ENCODE measurements at regions of chr10 and their contacts with region 1.

Region 1: DNA sequence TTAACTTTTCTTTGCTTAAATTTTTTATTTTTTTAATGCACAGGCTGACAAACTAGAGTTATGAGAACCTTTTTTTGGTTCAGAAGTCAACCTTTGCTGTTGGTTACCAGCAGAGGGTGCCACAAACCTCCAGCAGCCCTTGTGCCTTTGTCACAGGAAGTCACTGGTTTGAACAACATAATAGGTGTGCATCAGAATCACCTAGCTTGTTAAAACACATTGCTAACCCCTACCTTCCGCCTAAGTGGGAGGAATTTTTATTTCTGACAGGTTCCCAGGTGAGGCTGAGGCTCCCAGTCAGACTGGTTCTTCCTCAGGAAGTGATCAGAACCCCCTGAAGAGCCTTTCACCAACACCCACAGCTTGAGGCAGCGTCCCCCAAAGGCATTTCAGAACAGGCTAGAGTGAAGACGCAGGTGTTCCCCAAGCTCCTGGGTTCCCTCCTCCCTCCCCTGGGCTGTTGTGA is 22.6 kb upstream of the VDAC2 start:
- DNase-seq: no peak
- H3K4me3 ChIP-seq: no peak overlapping the region
- CTCF ChIP-seq: peak; percentile 68

Region 2: DNA sequence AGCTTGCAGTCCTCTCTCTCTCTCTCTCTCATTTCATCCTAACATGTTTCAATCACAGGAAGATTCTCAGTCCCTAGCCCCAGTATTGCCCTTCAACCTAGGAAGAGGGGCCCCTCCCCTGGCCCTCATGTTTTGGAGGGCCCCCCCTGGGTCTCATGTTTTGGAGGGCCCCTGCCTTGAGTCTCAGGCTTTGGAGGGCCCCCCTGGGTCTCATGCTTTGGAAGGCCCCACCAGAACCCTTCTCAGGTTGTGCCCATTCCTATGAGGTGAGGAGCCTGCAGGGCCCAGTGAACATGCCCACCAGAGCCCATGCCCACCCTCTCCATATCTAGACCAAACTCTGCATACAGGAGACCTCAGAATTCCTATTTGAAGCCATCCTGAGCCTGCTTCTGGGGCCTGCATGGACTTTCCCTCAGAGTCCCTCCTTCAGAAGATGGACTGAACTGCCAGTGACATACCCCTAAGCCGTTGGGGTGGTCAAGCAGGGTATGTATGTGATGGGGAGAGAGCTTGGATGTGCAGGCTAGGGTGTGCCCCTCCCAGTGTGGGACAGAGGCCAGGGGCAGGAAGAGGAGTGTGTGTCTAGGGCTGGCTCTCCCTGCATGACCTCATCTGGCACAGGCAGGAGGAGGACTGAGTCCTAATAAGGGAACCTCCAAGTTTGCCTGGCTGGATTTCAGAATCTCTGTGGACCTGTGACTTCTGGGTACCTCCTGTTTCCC is 14.5 kb after region 1 on chr10:
- CTCF ChIA-PET with region 1: interaction called, 42 read pairs
- POLR2A ChIA-PET with region 1: no interaction called
- DNase-seq: no peak
- H3K4me3 ChIP-seq: no peak overlapping the region
- CTCF ChIP-seq: no peak

Measured in AG04449 (cell line).